Activated CD4-positive, alpha-beta T cell treated with anti-CD3 and anti-CD28 coated beads for 36 hours (primary cell): ENCODE measurements at regions of chr10 and their contacts with region 1.

Region 1: DNA sequence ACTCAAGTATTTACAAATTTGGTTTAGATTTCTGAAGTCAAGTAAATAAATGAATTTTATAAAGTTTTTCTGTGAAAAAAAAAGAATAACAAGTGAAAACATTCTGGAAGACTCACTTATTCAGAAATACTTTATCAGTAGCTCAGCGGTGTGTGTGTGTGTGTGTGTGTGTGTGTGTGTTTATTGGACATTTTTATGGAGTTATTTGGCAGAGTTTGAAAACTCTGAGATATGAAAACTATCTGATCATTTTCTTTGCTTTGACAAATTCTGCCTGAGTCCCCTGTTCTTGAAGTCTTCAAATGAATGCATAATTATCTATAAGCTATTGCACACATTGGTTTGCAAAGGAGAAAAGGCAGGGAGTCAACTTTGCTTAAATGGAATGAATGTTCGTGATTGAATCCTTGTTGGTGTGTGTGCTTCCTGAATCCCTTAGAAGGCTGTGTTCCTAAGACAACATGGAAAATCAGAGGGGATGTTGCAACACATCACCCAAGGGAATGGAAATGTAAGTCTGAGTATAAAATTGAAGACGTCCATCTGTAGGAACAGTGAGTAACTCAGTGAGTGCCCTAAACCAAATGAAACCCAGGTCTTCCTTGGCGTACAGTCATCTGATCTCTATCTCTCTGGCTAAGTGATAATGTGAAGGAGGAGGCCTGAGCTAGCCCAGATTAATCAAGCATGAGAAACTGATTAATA is 160.9 kb downstream of the REEP3 start:
- DNase-seq: no peak
- ATAC-seq: peak; percentile 55
- H3K4me3 Mint-ChIP-seq: no peak overlapping the region
- H3K27ac Mint-ChIP-seq: no peak overlapping the region
- H3K4me1 Mint-ChIP-seq: peaks cover 16% of the 10 kb centered on the region
- H3K27me3 Mint-ChIP-seq: peaks cover 2% of the 10 kb centered on the region

Region 2: GRCh38 chr10:62934258-62934657 is 747.9 kb before region 1 on chr10:
- CTCF ChIA-PET with region 1: no interaction called
- POLR2A ChIA-PET with region 1: no interaction called
- intact Hi-C with region 1: no loop called
- DNase-seq: no peak
- ATAC-seq: no peak
- H3K4me3 Mint-ChIP-seq: no peak overlapping the region
- H3K27ac Mint-ChIP-seq: no peak overlapping the region
- H3K4me1 Mint-ChIP-seq: peaks cover 6% of the 10 kb centered on the region
- H3K27me3 Mint-ChIP-seq: peaks cover 30% of the 10 kb centered on the region

Region 3: DNA sequence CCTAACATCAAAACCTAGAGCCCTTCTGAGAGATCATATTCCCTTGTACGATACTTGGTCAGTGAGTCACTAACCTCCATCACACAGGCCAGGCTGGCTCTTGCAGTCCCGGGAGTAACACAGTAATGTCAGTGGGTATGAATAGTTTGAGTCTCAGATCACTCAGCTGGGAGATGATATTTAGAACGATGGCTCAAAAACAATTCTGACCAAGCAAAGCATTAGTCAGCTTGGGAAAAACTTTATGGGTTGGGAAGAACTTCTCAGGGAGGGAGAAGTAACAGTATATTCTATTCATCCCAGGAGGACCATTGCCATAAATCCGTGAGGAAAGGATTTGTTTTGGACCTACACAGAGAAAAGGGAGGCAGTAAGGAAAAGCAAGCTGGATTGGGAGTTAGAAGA is 18.1 kb after region 1 on chr10:
- CTCF ChIA-PET with region 1: interaction called, 3 read pairs
- POLR2A ChIA-PET with region 1: no interaction called
- intact Hi-C with region 1: loop called in 1 of 2 experiments (anchors 2 kb)
- DNase-seq: peak; percentile 46
- ATAC-seq: peak; percentile 98
- H3K4me3 Mint-ChIP-seq: no peak overlapping the region
- H3K27ac Mint-ChIP-seq: no peak overlapping the region
- H3K4me1 Mint-ChIP-seq: peaks cover 5% of the 10 kb centered on the region
- H3K27me3 Mint-ChIP-seq: peaks cover 2% of the 10 kb centered on the region

Region 4: DNA sequence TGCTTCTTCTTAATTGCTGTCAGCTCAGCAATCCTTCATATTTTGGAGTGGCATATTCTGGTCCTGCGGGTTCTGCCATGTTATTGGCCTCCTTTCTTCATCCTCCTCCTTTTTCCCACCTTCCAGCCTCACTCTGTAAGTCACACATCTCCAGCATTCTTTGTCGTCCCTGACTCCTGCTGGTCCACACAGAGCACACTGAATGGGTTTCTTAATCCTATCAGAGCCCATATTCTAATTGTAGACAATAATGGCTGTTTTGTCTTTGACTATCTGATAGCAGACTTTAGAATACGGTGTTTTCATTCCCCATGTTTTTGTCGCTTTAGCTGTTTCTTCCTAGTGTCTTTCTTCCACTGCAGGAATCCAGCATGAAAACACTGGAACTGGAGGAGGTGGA is 228.7 kb after region 1 on chr10:
- CTCF ChIA-PET with region 1: no interaction called
- POLR2A ChIA-PET with region 1: no interaction called
- intact Hi-C with region 1: no loop called
- DNase-seq: no peak
- ATAC-seq: no peak
- H3K4me3 Mint-ChIP-seq: no peak overlapping the region
- H3K27ac Mint-ChIP-seq: no peak overlapping the region
- H3K4me1 Mint-ChIP-seq: no peaks in the 10 kb centered on the region
- H3K27me3 Mint-ChIP-seq: peaks cover 7% of the 10 kb centered on the region